ENCODE measurements at regions of chr12 and their contacts with region 1.

Region 1: DNA sequence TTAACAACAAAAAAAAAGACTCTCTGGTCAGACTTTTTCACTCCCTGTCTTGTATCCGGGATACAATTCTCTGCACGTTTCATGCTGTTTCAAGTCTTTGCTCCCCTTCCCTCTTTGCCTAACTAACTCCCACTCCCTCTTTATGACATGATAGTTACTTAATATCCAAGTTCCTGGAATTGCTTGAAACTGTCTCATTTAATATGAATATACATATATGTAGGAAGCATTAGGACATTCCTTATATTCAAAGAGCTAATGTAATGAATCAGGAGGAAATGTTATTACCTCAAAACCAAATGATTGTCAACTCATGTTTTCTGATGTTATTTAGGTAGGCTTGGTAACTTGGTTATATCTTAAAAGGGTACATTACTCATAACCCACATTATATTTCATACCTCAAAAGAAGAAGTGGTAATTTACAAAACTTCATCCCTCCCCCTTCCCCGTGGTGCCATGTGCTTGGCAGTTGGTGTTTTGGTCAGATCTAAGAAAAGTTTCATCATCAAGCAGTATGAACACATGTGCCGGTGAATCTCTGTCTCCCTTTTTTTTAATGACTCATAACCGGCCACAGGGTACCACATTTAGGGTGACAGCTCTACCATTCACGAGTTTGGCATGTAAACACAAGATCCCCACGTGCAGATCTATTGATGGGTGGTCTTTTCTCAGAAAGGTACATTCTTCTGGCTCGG is 56.5 kb downstream of the HCAR2 start:
- DNase-seq: peak in 1 of 9 donors; percentile 41
- ATAC-seq: peak; percentile 89
- H3K4me3 ChIP-seq: no peak overlapping the region
- H3K4me3 Mint-ChIP-seq: peak overlapping the region in 2 of 10 donors; percentile 41 to 46
- H3K27ac ChIP-seq: no peak overlapping the region
- H3K27ac Mint-ChIP-seq: peak overlapping the region in 2 of 9 donors; percentile 0 to 24
- H3K4me1 ChIP-seq: no peaks in the 10 kb centered on the region
- H3K4me1 Mint-ChIP-seq: peaks cover 0 to 11% (median 8%) of the 10 kb centered on the region in 7 donors
- H3K27me3 ChIP-seq: no peaks in the 10 kb centered on the region
- H3K27me3 Mint-ChIP-seq: peaks cover 0 to 8% (median 7%) of the 10 kb centered on the region in 5 donors

Region 2: GRCh38 chr12:122730215-122731014 is 83.7 kb after region 1 on chr12 and contains the start of gene HCAR1:
- CTCF ChIA-PET with region 1: no interaction called
- POLR2A ChIA-PET with region 1: no interaction called
- intact Hi-C with region 1: loop called in 1 of 2 experiments (anchors 5 kb)
- DNase-seq: peak in 7 of 9 donors; percentile 5 to 75 (median 48)
- ATAC-seq: peak; percentile 63
- H3K4me3 ChIP-seq: peak within 1 kb of the TSS; percentile 31
- H3K4me3 Mint-ChIP-seq: peak within 1 kb of the TSS; percentile 30 to 78 (median 63)
- H3K27ac ChIP-seq: no peak within 1 kb of the TSS
- H3K27ac Mint-ChIP-seq: peak within 1 kb of the TSS in 8 of 9 donors; percentile 18 to 91 (median 51)
- H3K4me1 ChIP-seq: peaks cover 0 to 25% of the 10 kb centered on the region in 2 donors
- H3K4me1 Mint-ChIP-seq: peaks cover 22 to 80% (median 55%) of the 10 kb centered on the region in 7 donors
- H3K27me3 ChIP-seq: no peaks in the 10 kb centered on the region
- H3K27me3 Mint-ChIP-seq: peaks cover 0 to 4% (median 0%) of the 10 kb centered on the region in 5 donors
- total RNA-seq, gene HCAR1: 0.12 to 2.8 TPM in 2 of 5 experiments, not detected in the others

Measured in naive thymus-derived CD4-positive, alpha-beta T cell (primary cell).